ENCODE measurements at regions of chr13 and their contacts with region 1.

Region 1: GRCh38 chr13:35978603-35979316 is 152.4 kb downstream of the DCLK1 start:
- DNase-seq: peak in 1 of 2 experiments; percentile 72
- H3K4me3 ChIP-seq: no peak overlapping the region
- H3K27ac ChIP-seq: no peak overlapping the region
- H3K4me1 ChIP-seq: no peaks in the 10 kb centered on the region; a peak in 1 of 7 replicates
- H3K27me3 ChIP-seq: no peaks in the 10 kb centered on the region
- CTCF ChIP-seq: peak in 2 of 3 experiments; percentile 52 to 64; a peak in 2 of 4 replicates
- EP300 ChIP-seq: no peak
- POLR2A ChIP-seq: no peak
- RAD21 ChIP-seq: peak; percentile 95 to 96

Region 2: GRCh38 chr13:36086117-36086516 is 107.4 kb after region 1 on chr13:
- CTCF ChIA-PET with region 1: interaction called, 11 read pairs
- POLR2A ChIA-PET with region 1: no interaction called
- DNase-seq: peak in 1 of 2 experiments; percentile 7
- H3K4me3 ChIP-seq: no peak overlapping the region
- H3K27ac ChIP-seq: no peak overlapping the region
- H3K4me1 ChIP-seq: peaks cover 0 to 8% (median 3%) of the 10 kb centered on the region in 4 experiments; a peak in 4 of 7 replicates
- H3K27me3 ChIP-seq: no peaks in the 10 kb centered on the region
- CTCF ChIP-seq: peak; percentile 43 to 48 (median 44); a peak in 3 of 4 replicates
- EP300 ChIP-seq: no peak
- POLR2A ChIP-seq: no peak
- RAD21 ChIP-seq: peak; percentile 55 to 63

Region 3: GRCh38 chr13:36261976-36262375 is 283.2 kb after region 1 on chr13:
- CTCF ChIA-PET with region 1: interaction called, 21 read pairs
- POLR2A ChIA-PET with region 1: no interaction called
- DNase-seq: no peak
- H3K4me3 ChIP-seq: no peak overlapping the region
- H3K27ac ChIP-seq: no peak overlapping the region
- H3K4me1 ChIP-seq: peaks cover 0 to 4% (median 0%) of the 10 kb centered on the region in 4 experiments; a peak in 2 of 7 replicates
- H3K27me3 ChIP-seq: no peaks in the 10 kb centered on the region
- CTCF ChIP-seq: no peak
- EP300 ChIP-seq: no peak
- POLR2A ChIP-seq: no peak
- RAD21 ChIP-seq: no peak

Region 4: DNA sequence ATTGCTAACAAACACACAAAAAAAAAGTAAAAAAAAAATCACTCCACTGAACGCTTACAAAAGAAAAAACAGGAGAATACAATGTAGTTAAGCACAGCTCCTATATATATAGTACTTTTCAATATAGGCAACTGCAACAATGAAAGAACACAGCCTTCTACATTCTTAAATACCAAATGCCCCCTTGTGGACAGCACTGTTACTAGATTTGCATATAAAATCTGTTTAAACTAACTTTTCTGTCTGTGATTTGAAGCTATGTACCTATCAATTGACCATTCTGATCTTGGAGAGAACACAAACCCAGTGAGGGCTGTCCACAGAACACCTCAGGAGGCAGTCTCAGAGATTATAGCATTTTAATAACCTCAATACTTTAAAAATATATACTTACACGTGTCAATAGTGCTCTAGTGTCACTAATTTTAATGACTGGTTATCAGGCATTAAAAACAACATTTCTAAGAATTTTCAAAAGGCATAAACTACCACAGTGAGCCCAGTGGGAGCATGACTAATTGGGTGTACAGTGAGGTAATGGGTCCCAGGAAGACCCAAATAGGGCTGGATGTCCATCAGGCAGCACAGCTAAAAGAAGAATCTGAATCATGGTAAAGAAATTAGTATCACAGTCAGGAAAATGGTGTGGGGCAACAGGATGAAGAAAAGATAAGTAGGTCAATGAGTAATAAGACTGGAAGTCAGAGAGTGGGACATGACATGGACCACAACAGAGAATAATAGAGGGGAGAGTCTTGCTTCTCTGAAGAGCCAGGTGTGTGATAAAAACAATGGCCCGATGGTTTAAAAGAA is 296.6 kb after region 1 on chr13:
- CTCF ChIA-PET with region 1: interaction called, 81 read pairs
- POLR2A ChIA-PET with region 1: interaction called, 7 read pairs
- DNase-seq: no peak
- H3K4me3 ChIP-seq: no peak overlapping the region
- H3K27ac ChIP-seq: no peak overlapping the region
- H3K4me1 ChIP-seq: no peaks in the 10 kb centered on the region
- H3K27me3 ChIP-seq: no peaks in the 10 kb centered on the region
- CTCF ChIP-seq: peak in 2 of 3 experiments; percentile 37 to 44; a peak in 2 of 4 replicates
- EP300 ChIP-seq: no peak
- POLR2A ChIP-seq: no peak
- RAD21 ChIP-seq: peak; percentile 63 to 73

Region 5: DNA sequence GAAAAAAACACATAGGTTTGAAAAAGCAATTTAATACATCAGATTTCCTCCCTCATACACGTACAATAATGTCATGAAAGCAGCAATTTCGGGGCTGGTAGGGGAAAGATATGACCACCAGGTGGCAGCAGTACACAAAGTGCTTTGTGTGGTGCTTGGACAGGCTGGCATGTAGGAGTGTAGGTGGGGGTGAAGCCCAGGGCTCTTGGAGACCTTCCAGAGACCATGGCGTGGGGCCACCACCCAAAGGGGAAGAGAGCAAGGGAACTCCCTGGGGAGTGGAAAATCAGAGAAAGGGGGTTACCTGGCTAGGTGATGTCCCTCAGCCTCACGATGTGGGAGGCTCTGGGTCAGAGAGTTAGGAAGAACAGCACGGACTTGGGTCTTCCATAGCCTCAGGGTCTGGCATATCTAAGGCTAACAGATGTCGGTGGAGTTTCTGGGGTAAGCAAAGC is 441.7 kb after region 1 on chr13:
- CTCF ChIA-PET with region 1: interaction called, 14 read pairs
- POLR2A ChIA-PET with region 1: no interaction called
- DNase-seq: peak in 1 of 2 experiments; percentile 87
- H3K4me3 ChIP-seq: no peak overlapping the region
- H3K27ac ChIP-seq: no peak overlapping the region
- H3K4me1 ChIP-seq: no peaks in the 10 kb centered on the region
- H3K27me3 ChIP-seq: no peaks in the 10 kb centered on the region
- CTCF ChIP-seq: peak; percentile 74 to 89 (median 79)
- EP300 ChIP-seq: no peak
- POLR2A ChIP-seq: no peak
- RAD21 ChIP-seq: peak; percentile 87 to 92

Measured in H1 (cell line).